Breast epithelium (tissue), 4 donors: ENCODE measurements at regions of chr4 and their contacts with region 1.

Region 1: GRCh38 chr4:14399848-14400247 is 602.4 kb upstream of the CPEB2 start:
- DNase-seq: no peak
- H3K4me3 ChIP-seq: no peak overlapping the region
- H3K27ac ChIP-seq: no peak overlapping the region
- H3K4me1 ChIP-seq: no peaks in the 10 kb centered on the region
- H3K27me3 ChIP-seq: no peaks in the 10 kb centered on the region
- CTCF ChIP-seq: no peak
- POLR2A ChIP-seq: no peak

Region 2: DNA sequence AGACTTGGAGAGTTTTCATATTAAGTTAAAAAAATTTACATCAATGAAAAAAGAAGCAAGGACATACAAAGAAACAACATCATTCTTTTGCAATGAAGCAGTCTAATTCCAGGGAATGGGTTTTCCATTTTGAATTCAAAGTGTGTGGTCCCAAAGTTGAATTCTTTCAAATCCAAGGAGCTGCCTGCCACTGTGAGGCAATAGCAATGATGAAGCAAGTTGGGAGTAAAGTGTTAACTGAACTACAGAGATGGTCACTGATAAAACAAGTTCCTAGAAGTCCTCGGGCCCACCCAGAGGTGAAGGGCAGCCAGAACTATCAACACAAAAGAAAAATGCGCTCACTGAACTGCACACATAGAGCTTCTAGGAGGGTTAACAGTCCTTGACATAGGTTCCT is 1031.6 kb before region 1 on chr4:
- intact Hi-C with region 1: loop called (anchors 10 kb)
- DNase-seq: no peak
- H3K4me3 ChIP-seq: no peak overlapping the region
- H3K27ac ChIP-seq: no peak overlapping the region
- H3K4me1 ChIP-seq: no peaks in the 10 kb centered on the region
- H3K27me3 ChIP-seq: no peaks in the 10 kb centered on the region
- CTCF ChIP-seq: no peak
- POLR2A ChIP-seq: no peak

Region 3: GRCh38 chr4:13988353-13989305 is 411.2 kb before region 1 on chr4:
- intact Hi-C with region 1: no loop called
- DNase-seq: peak in 1 of 2 donors; percentile 18
- H3K4me3 ChIP-seq: no peak overlapping the region
- H3K27ac ChIP-seq: no peak overlapping the region
- H3K4me1 ChIP-seq: peaks cover 0 to 5% of the 10 kb centered on the region in 2 donors
- H3K27me3 ChIP-seq: no peaks in the 10 kb centered on the region
- CTCF ChIP-seq: no peak
- POLR2A ChIP-seq: no peak

Region 4: DNA sequence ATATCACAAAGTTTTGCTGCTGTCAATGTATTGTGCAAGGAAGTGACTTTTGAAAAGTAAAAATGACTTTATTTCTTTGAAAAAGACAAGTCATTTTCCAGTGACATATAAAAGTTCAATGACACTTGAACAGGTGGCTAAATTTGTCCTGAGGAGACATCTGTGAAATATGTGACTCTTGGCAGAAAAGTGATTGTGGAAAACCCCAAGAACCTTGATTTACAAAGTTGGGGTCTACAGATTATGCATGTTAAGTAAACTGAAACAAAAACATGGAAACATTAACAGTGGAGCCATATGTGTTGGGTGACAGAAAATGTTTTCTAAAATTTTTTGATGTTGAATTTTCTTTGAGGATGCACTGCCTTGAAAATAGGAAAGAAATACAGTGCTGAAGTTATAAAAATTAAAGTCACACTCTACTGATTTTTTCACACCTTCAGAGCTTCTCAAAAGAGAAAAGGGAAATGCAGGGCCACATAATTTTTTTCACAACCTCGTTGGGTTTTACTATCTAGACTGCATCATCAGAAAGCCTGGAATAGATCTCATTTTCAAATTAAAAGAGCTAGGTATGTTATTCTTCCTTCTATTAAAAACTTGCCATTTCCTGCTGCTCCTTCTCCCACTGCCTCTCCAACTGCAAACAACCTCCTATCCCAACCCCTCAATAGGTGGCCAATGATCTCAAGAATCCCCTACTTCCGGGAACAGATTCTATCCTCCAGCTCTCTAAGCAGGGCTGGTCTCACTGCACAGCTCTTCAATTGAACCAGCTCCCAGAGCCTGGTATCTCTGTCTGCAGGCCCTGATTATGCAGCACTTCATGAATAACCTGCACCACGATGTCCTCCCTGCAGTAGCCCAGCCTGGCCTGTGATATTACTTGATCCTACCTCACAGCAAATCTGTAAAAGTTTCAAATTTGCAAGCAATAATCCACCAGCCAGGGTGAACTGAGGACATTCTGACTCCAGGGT is 31.6 kb after region 1 on chr4:
- intact Hi-C with region 1: no loop called
- DNase-seq: no peak
- H3K4me3 ChIP-seq: no peak overlapping the region
- H3K27ac ChIP-seq: no peak overlapping the region
- H3K4me1 ChIP-seq: no peaks in the 10 kb centered on the region
- H3K27me3 ChIP-seq: no peaks in the 10 kb centered on the region
- CTCF ChIP-seq: no peak
- POLR2A ChIP-seq: no peak